ENCODE measurements at regions of chr9 and their contacts with region 1.

Region 1: DNA sequence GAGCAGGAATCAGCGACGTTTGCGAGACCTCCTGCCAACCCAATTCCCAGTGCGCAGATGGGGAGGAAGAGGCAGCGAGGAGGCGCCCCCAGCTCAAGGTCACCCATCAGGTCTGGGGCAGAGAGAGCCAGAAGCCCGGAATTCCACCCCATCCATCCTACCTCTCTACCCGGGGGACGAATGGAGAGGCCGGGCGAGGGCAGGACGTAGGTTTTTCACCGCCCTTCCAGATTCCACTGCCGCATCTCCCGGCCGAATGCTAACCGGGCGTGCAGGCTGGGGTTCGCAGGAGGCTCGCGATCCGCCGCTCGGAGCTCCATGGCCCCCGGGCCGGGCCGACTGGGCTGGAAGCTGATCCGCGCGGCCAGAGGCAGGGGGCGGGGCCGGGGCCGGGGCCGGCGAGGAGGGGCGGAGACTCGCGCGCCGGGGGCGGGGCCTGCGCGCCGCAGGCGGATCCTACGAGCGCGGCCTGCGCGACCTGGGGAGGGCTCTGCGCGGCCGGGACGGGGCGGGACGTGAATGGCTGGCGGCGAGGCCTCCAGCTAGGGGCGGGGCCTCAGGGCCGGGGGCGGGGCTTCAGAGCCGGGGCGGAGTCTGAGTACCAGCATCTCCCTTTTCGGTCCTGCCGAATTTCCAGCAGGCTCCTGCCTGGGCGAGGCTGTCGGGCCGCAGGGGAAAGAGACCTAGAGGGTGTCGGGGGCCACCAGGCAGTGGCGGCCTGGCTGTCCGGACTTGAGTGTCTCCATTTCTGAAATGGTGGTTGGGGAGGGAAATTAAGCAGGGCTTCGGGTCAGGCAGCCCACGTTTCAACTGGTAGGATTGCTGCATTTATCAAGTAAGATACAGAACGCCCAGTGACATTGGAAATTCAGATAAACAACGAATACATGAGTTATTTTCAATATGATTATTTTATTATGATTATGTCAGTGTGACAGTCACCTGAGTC is at the start of gene ST6GALNAC4:
- DNase-seq: peak; percentile 94
- ATAC-seq: peak; percentile 94
- total RNA-seq, gene ST6GALNAC4: 35.8 to 49.9 TPM

Region 2: DNA sequence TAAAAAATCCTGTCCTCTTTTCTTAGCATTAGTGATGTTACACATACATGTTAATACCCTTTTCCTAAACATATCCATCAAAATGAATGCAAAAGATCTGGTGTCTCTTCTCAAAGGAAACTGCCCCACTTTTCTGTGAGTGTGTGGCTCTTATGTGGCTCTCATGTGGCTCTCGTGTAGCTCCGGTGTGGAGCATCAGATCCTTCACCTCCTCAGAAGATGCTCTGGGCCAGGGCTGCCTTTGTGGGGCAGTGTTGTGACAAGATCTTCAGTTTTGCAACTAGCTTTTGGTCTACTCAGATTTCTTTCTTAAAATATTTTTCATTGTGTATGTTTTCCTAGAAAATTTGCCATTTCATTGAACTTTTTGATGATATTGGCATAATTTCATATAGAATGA is 633.0 kb before region 1 on chr9:
- intact Hi-C with region 1: no loop called
- DNase-seq: peak; percentile 32
- ATAC-seq: no peak

Region 3: GRCh38 chr9:127723450-127723849 is 193.5 kb before region 1 on chr9:
- intact Hi-C with region 1: no loop called
- DNase-seq: no peak
- ATAC-seq: peak; percentile 27 to 64

Region 4: GRCh38 chr9:127877566-127877998 is 39.4 kb before region 1 on chr9 and contains the start of gene AK1:
- intact Hi-C with region 1: loop called in 1 of 2 experiments (anchors 5 kb)
- DNase-seq: peak; percentile 88
- ATAC-seq: peak; percentile 81 to 83
- total RNA-seq, gene AK1: 593 to 626 TPM